B cell (primary cell): ENCODE measurements at regions of chr16 and their contacts with region 1.

Region 1: GRCh38 chr16:12455287-12455798 is 348.3 kb downstream of the CPPED1 start:
- DNase-seq: peak; percentile 39
- ATAC-seq: no peak
- H3K4me3 ChIP-seq: no peak overlapping the region
- H3K4me3 Mint-ChIP-seq: no peak overlapping the region
- H3K27ac ChIP-seq: no peak overlapping the region
- H3K27ac Mint-ChIP-seq: no peak overlapping the region
- H3K4me1 ChIP-seq: peaks cover 20 to 28% of the 10 kb centered on the region in 2 donors
- H3K4me1 Mint-ChIP-seq: peaks cover 50% of the 10 kb centered on the region
- H3K27me3 ChIP-seq: no peaks in the 10 kb centered on the region
- H3K27me3 Mint-ChIP-seq: no peaks in the 10 kb centered on the region
- CTCF ChIP-seq: peak; percentile 70

Region 2: DNA sequence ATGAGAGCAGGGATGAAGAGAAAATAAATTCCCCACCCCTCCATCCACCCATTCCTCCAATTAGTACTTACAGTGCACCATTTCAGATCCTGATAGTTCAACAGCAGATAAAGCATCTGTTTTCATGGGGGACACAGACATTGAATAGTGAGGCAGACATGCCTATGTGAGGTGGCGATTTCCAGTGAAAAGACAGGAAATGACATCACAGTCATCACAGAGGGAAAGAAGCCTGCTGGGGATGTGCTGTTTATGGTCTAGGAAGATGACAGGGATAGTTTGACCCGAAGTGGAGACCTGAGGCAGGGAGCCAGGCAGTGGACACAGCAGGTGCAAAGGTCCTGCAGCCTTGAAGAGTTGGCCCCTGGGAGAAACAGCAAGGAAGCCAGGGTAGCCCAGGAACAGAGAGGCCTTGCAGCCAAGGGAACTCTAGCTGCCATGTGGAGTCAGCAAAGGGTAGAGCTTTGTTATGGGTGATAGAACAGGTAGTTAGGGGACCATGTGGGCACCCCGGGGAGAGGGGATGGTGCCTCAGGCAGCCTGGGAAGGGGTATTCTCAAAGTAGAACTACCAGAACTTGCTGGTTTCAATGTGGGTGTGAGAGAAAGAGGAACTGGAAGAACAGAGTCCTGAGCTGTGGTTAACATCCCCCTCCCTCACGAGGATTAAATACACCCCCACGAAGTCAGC is 91.7 kb after region 1 on chr16:
- CTCF ChIA-PET with region 1: no interaction called
- POLR2A ChIA-PET with region 1: no interaction called
- intact Hi-C with region 1: loop called (anchors 10 kb)
- DNase-seq: peak; percentile 65
- ATAC-seq: peak; percentile 76
- H3K4me3 ChIP-seq: peak overlapping the region in 1 of 5 experiments; percentile 8
- H3K4me3 Mint-ChIP-seq: peak overlapping the region; percentile 70
- H3K27ac ChIP-seq: peak overlapping the region; percentile 10 to 85
- H3K27ac Mint-ChIP-seq: peak overlapping the region; percentile 83
- H3K4me1 ChIP-seq: peaks cover 59 to 82% of the 10 kb centered on the region in 2 donors
- H3K4me1 Mint-ChIP-seq: peaks cover 89% of the 10 kb centered on the region
- H3K27me3 ChIP-seq: no peaks in the 10 kb centered on the region
- H3K27me3 Mint-ChIP-seq: no peaks in the 10 kb centered on the region
- CTCF ChIP-seq: no peak

Region 3: GRCh38 chr16:12613131-12613991 is 158.0 kb after region 1 on chr16:
- CTCF ChIA-PET with region 1: no interaction called
- POLR2A ChIA-PET with region 1: no interaction called
- intact Hi-C with region 1: no loop called
- DNase-seq: no peak
- ATAC-seq: no peak
- H3K4me3 ChIP-seq: no peak overlapping the region
- H3K4me3 Mint-ChIP-seq: no peak overlapping the region
- H3K27ac ChIP-seq: no peak overlapping the region
- H3K27ac Mint-ChIP-seq: no peak overlapping the region
- H3K4me1 ChIP-seq: no peaks in the 10 kb centered on the region
- H3K4me1 Mint-ChIP-seq: no peaks in the 10 kb centered on the region
- H3K27me3 ChIP-seq: no peaks in the 10 kb centered on the region
- H3K27me3 Mint-ChIP-seq: peaks cover 16% of the 10 kb centered on the region
- CTCF ChIP-seq: no peak

Region 4: GRCh38 chr16:12803203-12804097 is 348.1 kb after region 1 on chr16 and contains the start of gene CPPED1:
- CTCF ChIA-PET with region 1: no interaction called
- POLR2A ChIA-PET with region 1: no interaction called
- intact Hi-C with region 1: loop called (anchors 5 kb)
- DNase-seq: peak; percentile 95
- ATAC-seq: peak; percentile 88
- H3K4me3 ChIP-seq: peak within 1 kb of the TSS; percentile 68 to 99 (median 73)
- H3K4me3 Mint-ChIP-seq: peak within 1 kb of the TSS; percentile 92
- H3K27ac ChIP-seq: peak within 1 kb of the TSS; percentile 58 to 72
- H3K27ac Mint-ChIP-seq: peak within 1 kb of the TSS; percentile 93
- H3K4me1 ChIP-seq: peaks cover 19 to 24% of the 10 kb centered on the region in 2 donors
- H3K4me1 Mint-ChIP-seq: peaks cover 21% of the 10 kb centered on the region
- H3K27me3 ChIP-seq: peaks cover 0 to 2% (median 0%) of the 10 kb centered on the region in 4 experiments
- H3K27me3 Mint-ChIP-seq: peaks cover 3% of the 10 kb centered on the region
- CTCF ChIP-seq: no peak
- total RNA-seq, gene CPPED1: 11.3 and 14.1 TPM in 2 replicates